ENCODE measurements at regions of chr19 and their contacts with region 1.

Region 1: GRCh38 chr19:47436712-47437401 is 17.5 kb upstream of the MEIS3 start:
- DNase-seq: peak; percentile 78 to 85 (median 83)
- ATAC-seq: peak; percentile 94 to 100 (median 98)
- H3K4me3 ChIP-seq: no peak overlapping the region
- H3K27ac ChIP-seq: no peak overlapping the region
- H3K4me1 ChIP-seq: no peaks in the 10 kb centered on the region
- H3K27me3 ChIP-seq: no peaks in the 10 kb centered on the region
- CTCF ChIP-seq: peak; percentile 87 to 91 (median 88)
- POLR2A ChIP-seq: no peak

Region 2: GRCh38 chr19:47357788-47358680 is 78.8 kb before region 1 on chr19:
- intact Hi-C with region 1: no loop called
- DNase-seq: no peak
- ATAC-seq: no peak
- H3K4me3 ChIP-seq: no peak overlapping the region
- H3K27ac ChIP-seq: no peak overlapping the region
- H3K4me1 ChIP-seq: peaks cover 0 to 7% (median 2%) of the 10 kb centered on the region in 4 donors
- H3K27me3 ChIP-seq: no peaks in the 10 kb centered on the region
- CTCF ChIP-seq: no peak
- POLR2A ChIP-seq: no peak

Region 3: DNA sequence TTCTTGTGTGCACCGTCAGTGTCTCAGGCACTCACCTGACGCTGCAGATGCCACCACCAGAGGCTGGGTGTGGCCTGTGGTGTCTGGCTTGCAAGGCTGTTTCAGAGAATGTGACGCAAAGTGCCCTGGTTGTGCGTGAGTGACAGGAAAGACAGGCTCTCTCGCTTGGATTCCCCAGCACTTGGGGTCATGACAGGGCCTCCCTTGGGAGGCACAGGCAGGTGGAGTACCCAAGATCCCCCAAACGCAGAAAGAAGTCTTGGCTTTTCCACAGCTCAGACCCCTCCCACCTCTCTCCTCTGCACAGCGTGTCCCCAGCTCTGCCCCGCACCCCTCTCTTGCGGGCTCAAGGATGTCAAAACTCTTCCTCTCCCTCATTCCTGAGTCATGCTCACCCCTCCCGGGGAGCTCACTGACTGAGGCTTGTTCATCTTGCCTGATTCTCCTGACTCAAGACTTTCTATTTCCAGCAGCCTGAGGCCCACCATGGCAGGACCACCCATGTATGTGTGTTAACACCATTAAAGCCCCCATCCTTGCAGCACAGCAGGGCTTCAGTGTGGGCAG is 66.7 kb before region 1 on chr19:
- intact Hi-C with region 1: no loop called
- DNase-seq: peak in 1 of 3 donors; percentile 61
- ATAC-seq: peak; percentile 38 to 49 (median 40)
- H3K4me3 ChIP-seq: no peak overlapping the region
- H3K27ac ChIP-seq: no peak overlapping the region
- H3K4me1 ChIP-seq: peaks cover 0 to 8% (median 2%) of the 10 kb centered on the region in 4 donors
- H3K27me3 ChIP-seq: no peaks in the 10 kb centered on the region
- CTCF ChIP-seq: no peak
- POLR2A ChIP-seq: no peak

Region 4: GRCh38 chr19:47381653-47382279 is 55.1 kb before region 1 on chr19:
- intact Hi-C with region 1: no loop called
- DNase-seq: peak in 1 of 3 donors; percentile 75
- ATAC-seq: peak in 3 of 4 donors; percentile 22 to 35 (median 27)
- H3K4me3 ChIP-seq: no peak overlapping the region
- H3K27ac ChIP-seq: no peak overlapping the region
- H3K4me1 ChIP-seq: peaks cover 0 to 4% (median 2%) of the 10 kb centered on the region in 4 donors
- H3K27me3 ChIP-seq: no peaks in the 10 kb centered on the region
- CTCF ChIP-seq: no peak
- POLR2A ChIP-seq: no peak

Region 5: DNA sequence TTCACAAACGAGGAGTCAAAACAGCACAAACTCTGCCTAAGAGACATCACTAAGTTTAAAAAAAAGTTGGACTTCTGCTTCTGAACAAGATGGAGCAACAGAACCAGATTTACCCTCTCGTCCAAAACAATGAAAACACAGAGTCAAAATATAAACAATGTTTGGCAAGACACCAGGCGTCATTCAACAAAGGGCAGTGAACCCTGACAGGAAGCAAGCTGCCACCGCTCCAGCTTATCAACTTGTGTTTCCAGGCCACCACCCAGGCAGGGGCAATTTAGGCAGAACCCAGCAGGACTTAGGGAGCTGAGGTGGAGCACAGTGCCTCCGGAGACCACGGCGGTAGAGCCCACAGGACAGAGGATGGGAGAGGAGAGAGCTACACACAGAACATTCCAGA is 86.6 kb after region 1 on chr19:
- intact Hi-C with region 1: loop called in 1 of 2 experiments (anchors 10 kb)
- DNase-seq: no peak
- ATAC-seq: peak; percentile 35 to 75 (median 63)
- H3K4me3 ChIP-seq: no peak overlapping the region
- H3K27ac ChIP-seq: no peak overlapping the region
- H3K4me1 ChIP-seq: peaks cover 0 to 6% (median 0%) of the 10 kb centered on the region in 4 donors
- H3K27me3 ChIP-seq: no peaks in the 10 kb centered on the region
- CTCF ChIP-seq: no peak
- POLR2A ChIP-seq: no peak

Measured in right lobe of liver (tissue), 6 donors.